ENCODE measurements at regions of chr3 and their contacts with region 1.

Region 1: DNA sequence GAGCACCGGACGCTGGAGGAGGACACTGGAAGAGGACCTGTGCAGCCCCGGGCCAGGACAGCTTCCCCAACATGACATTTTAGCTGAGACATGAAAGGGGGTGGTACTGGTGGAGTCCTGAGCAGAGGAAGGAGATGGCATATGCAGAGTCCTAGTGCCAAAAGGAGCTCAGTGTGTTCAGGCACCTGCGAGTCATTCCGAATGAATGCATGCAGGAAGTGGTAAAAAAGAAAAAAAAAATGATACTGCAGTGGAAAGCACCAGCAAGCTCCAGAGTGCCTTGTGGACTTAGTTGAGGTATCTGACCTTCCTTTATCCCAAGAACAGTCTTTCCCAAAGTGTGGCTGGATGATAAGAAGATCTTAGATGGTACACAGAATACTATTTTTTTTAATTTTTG is 6.6 kb upstream of the ZNF148 start:
- DNase-seq: peak in 8 of 9 donors; percentile 15 to 50 (median 31)
- ATAC-seq: peak; percentile 76
- H3K4me3 ChIP-seq: no peak overlapping the region
- H3K4me3 Mint-ChIP-seq: peak overlapping the region in 7 of 10 donors; percentile 27 to 65 (median 41)
- H3K27ac ChIP-seq: no peak overlapping the region
- H3K27ac Mint-ChIP-seq: peak overlapping the region in 6 of 9 donors; percentile 6 to 73 (median 50)
- H3K4me1 ChIP-seq: peaks cover 0 to 10% of the 10 kb centered on the region in 2 donors
- H3K4me1 Mint-ChIP-seq: peaks cover 10 to 24% (median 12%) of the 10 kb centered on the region in 7 donors
- H3K27me3 ChIP-seq: no peaks in the 10 kb centered on the region
- H3K27me3 Mint-ChIP-seq: peaks cover 0 to 15% (median 3%) of the 10 kb centered on the region in 5 donors

Region 2: DNA sequence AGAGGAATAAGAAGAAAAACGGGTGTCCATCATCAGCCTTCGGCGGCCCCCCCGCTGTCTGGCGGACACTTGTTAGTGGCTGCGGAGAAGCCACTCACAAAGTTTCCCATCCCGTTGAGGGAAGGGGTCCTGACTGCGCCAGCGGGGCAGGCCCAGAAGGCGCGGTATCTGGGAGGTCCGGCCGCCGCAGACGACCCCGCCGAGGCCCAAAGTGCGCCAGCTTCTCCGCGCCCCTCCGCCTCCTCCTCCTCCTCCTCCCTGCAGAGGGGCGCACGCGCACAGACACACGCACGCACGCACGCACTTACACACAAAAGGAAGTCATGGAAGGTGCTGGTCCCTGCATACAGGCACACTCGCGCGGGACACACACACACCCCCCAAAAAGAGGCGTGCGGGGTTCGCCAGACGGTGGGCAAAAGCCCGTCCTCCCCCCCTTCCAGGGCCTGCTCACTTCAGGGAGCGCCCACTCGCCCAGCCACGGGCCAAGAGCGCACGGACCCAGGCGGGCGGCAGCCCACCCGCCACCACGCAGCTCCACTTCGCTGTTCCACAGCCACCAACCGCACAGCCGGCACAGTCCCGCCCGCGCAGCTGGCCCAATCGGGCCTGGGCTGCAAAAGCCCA is 24.6 kb before region 1 on chr3:
- CTCF ChIA-PET with region 1: no interaction called
- POLR2A ChIA-PET with region 1: interaction called, 30 read pairs
- intact Hi-C with region 1: no loop called
- DNase-seq: peak; percentile 51 to 84 (median 75)
- ATAC-seq: peak; percentile 97
- H3K4me3 ChIP-seq: peak overlapping the region; percentile 65
- H3K4me3 Mint-ChIP-seq: peak overlapping the region; percentile 81 to 98 (median 90)
- H3K27ac ChIP-seq: peak overlapping the region; percentile 89
- H3K27ac Mint-ChIP-seq: peak overlapping the region; percentile 20 to 96 (median 92)
- H3K4me1 ChIP-seq: peaks cover 0 to 6% of the 10 kb centered on the region in 2 donors
- H3K4me1 Mint-ChIP-seq: peaks cover 51 to 93% (median 76%) of the 10 kb centered on the region in 7 donors
- H3K27me3 ChIP-seq: no peaks in the 10 kb centered on the region
- H3K27me3 Mint-ChIP-seq: no peaks in the 10 kb centered on the region

Region 3: DNA sequence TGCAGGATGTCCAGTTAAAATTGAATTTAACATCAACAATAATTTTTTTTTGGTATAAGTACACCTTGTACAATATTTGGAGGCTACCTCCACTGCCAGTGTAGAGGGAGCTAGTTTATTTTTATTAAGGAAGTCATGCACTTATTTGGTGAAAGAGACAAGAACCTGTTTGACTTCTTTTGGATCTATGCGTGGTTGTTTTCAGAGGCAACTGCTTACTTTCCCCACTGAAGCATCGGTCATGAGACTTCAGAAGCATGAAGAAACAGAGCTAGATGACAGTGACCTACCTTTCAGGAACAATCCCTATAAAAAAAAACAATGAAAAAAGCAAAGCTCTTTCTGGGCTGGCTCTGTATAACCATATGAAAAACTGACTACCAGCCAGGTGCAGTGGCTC is 13.3 kb after region 1 on chr3:
- CTCF ChIA-PET with region 1: no interaction called
- POLR2A ChIA-PET with region 1: interaction called, 10 read pairs
- intact Hi-C with region 1: no loop called
- DNase-seq: no peak
- ATAC-seq: no peak
- H3K4me3 ChIP-seq: no peak overlapping the region
- H3K4me3 Mint-ChIP-seq: no peak overlapping the region
- H3K27ac ChIP-seq: no peak overlapping the region
- H3K27ac Mint-ChIP-seq: no peak overlapping the region
- H3K4me1 ChIP-seq: no peaks in the 10 kb centered on the region
- H3K4me1 Mint-ChIP-seq: peaks cover 0 to 8% (median 4%) of the 10 kb centered on the region in 7 donors
- H3K27me3 ChIP-seq: peaks cover 0 to 3% of the 10 kb centered on the region in 2 donors
- H3K27me3 Mint-ChIP-seq: peaks cover 6 to 44% (median 11%) of the 10 kb centered on the region in 5 donors